ENCODE measurements at regions of chr9 and their contacts with region 1.

Region 1: DNA sequence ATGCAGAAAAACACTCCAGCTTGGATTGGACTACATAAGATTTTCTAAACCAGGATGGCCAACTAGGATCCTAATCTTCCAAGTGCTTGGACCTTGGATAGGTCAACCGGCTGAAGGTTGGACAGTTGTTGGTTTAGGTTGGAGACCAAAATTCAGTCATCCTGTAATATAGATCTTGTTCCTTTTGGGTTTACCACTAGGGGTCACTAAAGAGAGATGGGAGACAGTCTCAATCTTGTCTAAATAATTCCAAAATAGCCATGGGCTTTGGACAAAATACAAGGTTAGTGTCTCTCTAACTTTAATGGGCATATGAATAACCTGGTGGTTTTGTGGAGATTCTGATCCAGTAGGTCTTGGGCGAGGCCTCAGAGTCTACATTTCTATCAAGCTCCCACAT is 148.7 kb upstream of the ERCC6L2 start:
- DNase-seq: no peak
- H3K4me3 Mint-ChIP-seq: no peak overlapping the region
- H3K27ac Mint-ChIP-seq: no peak overlapping the region
- H3K4me1 Mint-ChIP-seq: peaks cover 41% of the 10 kb centered on the region
- H3K27me3 Mint-ChIP-seq: peaks cover 14% of the 10 kb centered on the region

Region 2: GRCh38 chr9:95004411-95005277 is 722.1 kb before region 1 on chr9:
- intact Hi-C with region 1: loop called (anchors 10 kb)
- DNase-seq: peak; percentile 32
- H3K4me3 Mint-ChIP-seq: peak overlapping the region; percentile 83
- H3K27ac Mint-ChIP-seq: peak overlapping the region; percentile 80
- H3K4me1 Mint-ChIP-seq: peaks cover 41% of the 10 kb centered on the region
- H3K27me3 Mint-ChIP-seq: peaks cover 45% of the 10 kb centered on the region

Region 3: DNA sequence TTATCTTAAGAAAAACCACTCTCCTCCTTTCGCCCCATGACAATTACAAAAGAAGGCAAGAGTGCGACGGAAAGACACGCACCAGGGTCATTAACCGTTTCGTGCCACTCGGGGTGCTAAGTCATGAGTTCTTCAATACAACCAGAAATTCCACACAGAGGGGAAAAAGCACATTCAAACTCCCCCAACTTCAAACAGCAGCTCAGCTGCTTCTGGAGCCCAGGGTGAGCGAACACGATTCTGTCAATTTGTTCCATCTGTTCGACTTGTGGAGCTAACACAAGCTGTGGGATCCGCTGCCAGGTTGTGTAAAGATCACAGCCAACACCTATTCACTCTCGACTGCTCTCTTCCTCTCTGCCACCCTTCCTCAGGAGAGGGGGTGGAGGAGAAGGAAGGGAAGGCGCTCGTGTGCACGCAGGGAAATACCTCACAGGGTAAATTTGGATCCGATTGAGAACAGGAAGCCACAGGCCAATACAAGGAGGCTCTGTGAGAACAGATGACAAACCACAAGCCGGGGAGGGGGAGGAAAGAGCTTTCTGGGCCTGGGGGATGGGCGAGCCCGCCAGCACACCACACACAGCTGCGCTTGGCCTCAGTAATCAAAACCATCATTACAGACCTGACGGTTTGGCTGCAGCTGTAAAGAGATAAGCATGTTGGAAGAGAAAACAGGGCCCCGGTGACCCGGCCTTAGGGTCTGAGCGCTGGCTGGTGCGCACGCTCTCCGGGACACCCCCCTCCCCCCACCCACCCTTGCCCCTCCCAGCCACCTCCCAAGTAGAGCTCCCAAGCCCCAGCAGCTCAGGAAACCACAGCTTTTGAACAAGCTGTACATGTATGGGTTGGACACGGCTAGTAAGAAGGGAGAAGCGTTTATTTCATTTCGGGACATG is 264.3 kb before region 1 on chr9:
- intact Hi-C with region 1: loop called (anchors 1 kb)
- DNase-seq: peak; percentile 78
- H3K4me3 Mint-ChIP-seq: peak overlapping the region; percentile 77
- H3K27ac Mint-ChIP-seq: peak overlapping the region; percentile 82
- H3K4me1 Mint-ChIP-seq: peaks cover 34% of the 10 kb centered on the region
- H3K27me3 Mint-ChIP-seq: peaks cover 53% of the 10 kb centered on the region

Region 4: DNA sequence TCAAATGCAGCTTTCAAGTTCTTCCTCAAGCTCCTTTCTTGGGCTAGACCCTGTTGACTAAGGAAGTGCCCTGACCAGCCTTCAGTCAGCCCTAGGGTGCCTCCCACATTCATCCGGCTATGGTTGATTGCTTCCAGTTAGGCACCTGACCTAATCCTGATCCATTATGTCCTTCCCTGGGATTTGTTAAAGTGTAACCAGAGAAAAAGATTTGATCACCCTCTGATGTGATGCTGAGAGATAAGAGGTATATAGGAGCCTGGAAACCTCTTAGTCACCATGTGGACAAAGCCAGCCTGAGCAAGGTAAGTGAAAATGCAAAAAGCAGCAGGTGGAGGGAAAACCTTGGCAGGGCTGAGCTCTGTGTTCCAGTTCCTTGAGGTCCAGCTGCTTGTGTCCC is 30.1 kb before region 1 on chr9:
- intact Hi-C with region 1: no loop called
- DNase-seq: no peak
- H3K4me3 Mint-ChIP-seq: no peak overlapping the region
- H3K27ac Mint-ChIP-seq: no peak overlapping the region
- H3K4me1 Mint-ChIP-seq: no peaks in the 10 kb centered on the region
- H3K27me3 Mint-ChIP-seq: peaks cover 13% of the 10 kb centered on the region

Region 5: DNA sequence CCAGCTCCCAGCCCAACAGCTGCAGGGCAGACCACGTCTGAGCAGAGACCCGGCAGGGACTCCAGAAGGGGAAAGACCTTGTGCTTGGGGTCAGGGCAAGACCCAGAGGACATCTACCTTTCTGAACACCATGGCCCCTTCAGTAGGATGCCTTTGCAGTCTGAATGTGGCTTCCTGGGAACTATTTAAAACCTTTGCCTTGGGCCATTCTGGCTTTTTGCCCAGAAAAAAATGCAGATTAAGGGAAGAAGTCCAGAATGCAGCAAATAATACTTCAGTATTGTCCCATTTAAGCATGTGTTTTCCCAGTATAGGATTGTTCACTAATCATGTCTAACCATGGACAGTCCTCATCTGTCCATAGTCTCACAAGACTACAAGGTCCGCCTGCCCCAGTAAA is 81.3 kb after region 1 on chr9:
- intact Hi-C with region 1: loop called (anchors 5 kb)
- DNase-seq: no peak
- H3K4me3 Mint-ChIP-seq: no peak overlapping the region
- H3K27ac Mint-ChIP-seq: no peak overlapping the region
- H3K4me1 Mint-ChIP-seq: peaks cover 23% of the 10 kb centered on the region
- H3K27me3 Mint-ChIP-seq: peaks cover 11% of the 10 kb centered on the region

Region 6: GRCh38 chr9:96015876-96016686 is 289.3 kb after region 1 on chr9:
- intact Hi-C with region 1: loop called (anchors 2 kb)
- DNase-seq: peak; percentile 48
- H3K4me3 Mint-ChIP-seq: peak overlapping the region; percentile 44
- H3K27ac Mint-ChIP-seq: peak overlapping the region; percentile 100
- H3K4me1 Mint-ChIP-seq: peaks cover 64% of the 10 kb centered on the region
- H3K27me3 Mint-ChIP-seq: no peaks in the 10 kb centered on the region

Region 7: GRCh38 chr9:96241391-96241809 is 514.6 kb after region 1 on chr9:
- intact Hi-C with region 1: loop called (anchors 1 kb)
- DNase-seq: peak; percentile 53
- H3K4me3 Mint-ChIP-seq: peak overlapping the region; percentile 7
- H3K27ac Mint-ChIP-seq: peak overlapping the region; percentile 88
- H3K4me1 Mint-ChIP-seq: peaks cover 16% of the 10 kb centered on the region
- H3K27me3 Mint-ChIP-seq: peaks cover 69% of the 10 kb centered on the region

Measured in activated T-helper 1 cell treated with anti-CD3 and anti-CD28 coated beads, Interleukin-12 subunit alpha, Interleukin-12 subunit beta, Interleukin-2, Interleukin-4 antibody, amounts not matched to agents 30 ng/mL and 10 ng/mL and 1 ng/mL, durations not matched to agents 14 hours and 24 hours and 36 hours (primary cell).